ENCODE measurements at regions of chr6 and their contacts with region 1.

Region 1: GRCh38 chr6:27518881-27519795 is 46.2 kb upstream of the ZNF184 start:
- DNase-seq: peak; percentile 93
- H3K4me3 ChIP-seq: peak overlapping the region; percentile 47 to 74 (median 61)
- H3K27ac ChIP-seq: peak overlapping the region; percentile 27
- H3K4me1 ChIP-seq: peaks cover 3% of the 10 kb centered on the region
- H3K27me3 ChIP-seq: peaks cover 19 to 30% of the 10 kb centered on the region in 2 experiments
- CTCF ChIP-seq: peak; percentile 57 to 63
- POLR2A ChIP-seq: no peak

Region 2: DNA sequence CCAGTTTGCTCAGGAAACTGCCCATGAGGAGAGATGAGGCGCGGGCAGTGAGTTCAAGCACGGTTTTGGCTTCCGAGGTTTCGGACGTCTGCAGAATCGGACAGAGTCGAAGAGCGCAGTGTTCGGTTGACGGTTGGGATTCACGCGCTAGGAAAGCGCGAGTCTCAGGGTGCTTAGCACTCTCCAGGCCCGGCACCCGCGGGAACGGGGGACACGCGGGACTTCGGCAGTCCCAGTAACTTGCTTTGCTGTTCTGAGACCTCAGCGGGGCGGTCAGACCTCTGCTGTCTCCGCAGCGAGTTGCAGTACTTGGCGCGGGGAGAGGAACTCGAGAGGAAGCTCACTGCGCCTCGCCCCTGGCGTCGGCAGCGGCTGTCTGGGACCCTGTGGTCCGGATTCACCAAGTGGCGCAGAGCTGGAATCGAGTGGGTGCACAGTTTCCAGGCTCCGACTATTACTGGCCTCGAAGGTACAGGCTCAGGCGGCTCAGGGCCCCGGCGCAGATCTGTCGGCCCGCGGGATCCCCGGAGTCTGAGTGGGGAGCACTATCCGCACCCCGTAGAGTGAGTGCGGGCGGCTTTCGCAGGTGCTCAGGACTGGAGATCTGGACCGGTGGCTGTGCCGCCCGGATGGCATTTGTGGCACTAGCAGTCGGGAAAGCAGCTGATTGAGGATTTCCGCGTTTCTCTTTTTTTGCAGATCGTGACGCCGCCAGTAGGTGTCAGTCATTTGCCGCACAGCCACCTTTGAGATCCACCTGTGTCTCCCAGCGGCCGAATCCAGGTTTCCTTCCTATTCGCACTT is 206.8 kb before region 1 on chr6 and contains the start of gene POM121L2:
- CTCF ChIA-PET with region 1: interaction called, 9 read pairs
- POLR2A ChIA-PET with region 1: no interaction called
- dilution Hi-C with region 1: no loop called
- intact Hi-C with region 1: loop called (anchors 1 kb)
- DNase-seq: peak; percentile 65
- H3K4me3 ChIP-seq: peak within 1 kb of the TSS; percentile 41 to 60 (median 51)
- H3K27ac ChIP-seq: no peak within 1 kb of the TSS
- H3K4me1 ChIP-seq: peaks cover 9% of the 10 kb centered on the region
- H3K27me3 ChIP-seq: peaks cover 14 to 20% of the 10 kb centered on the region in 2 experiments
- CTCF ChIP-seq: peak; percentile 50 to 69
- POLR2A ChIP-seq: no peak
- total RNA-seq, gene POM121L2: not detected in 2 replicates

Region 3: DNA sequence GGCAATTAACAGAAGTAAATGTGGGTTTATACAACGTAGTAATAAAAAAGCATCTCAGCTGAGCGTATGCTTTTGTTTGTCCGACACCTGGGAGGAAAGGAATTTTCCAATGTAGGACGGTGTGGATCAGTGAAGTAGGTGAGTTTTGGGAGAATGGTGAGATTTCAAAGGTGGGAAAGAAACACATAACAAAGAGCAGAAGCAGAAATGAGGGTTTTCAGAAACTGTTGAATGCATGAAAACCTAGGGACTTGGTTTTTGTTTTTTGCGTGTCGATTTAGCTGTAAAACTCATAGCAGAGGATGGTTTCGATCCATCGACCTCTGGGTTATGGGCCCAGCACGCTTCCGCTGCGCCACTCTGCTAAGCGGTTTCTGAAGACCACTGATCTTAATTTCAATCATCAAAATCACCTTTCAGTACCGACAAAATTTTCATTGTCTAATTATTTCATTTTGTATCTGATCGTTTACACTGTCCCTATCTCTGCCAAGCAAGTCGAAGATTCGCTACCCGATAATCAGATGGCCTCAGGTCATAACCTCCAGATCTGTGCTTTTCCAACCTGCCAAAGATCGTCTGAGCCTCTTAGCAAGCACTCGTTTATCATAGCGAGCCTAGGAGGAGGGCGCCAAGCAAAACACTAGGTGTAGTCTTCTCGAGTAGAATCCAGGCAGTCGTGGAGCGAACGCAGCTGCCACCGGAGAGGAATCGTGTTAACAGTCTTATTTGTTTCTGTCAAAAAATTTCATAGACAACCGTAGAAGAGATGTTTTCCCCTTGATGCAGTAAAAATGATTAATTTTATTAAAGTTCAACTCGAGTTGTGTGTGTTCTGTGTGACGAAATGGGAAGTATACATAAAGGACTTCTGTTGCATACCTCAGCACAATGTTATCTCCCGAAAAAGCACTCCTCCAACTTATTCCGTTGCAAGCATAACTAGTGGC is 186.2 kb before region 1 on chr6:
- CTCF ChIA-PET with region 1: no interaction called
- POLR2A ChIA-PET with region 1: no interaction called
- dilution Hi-C with region 1: no loop called
- intact Hi-C with region 1: no loop called
- DNase-seq: peak; percentile 37
- H3K4me3 ChIP-seq: peak overlapping the region in 2 of 3 experiments; percentile 29 to 47
- H3K27ac ChIP-seq: no peak overlapping the region
- H3K4me1 ChIP-seq: no peaks in the 10 kb centered on the region
- H3K27me3 ChIP-seq: peaks cover 1 to 2% of the 10 kb centered on the region in 2 experiments
- CTCF ChIP-seq: no peak
- POLR2A ChIP-seq: no peak

Region 4: DNA sequence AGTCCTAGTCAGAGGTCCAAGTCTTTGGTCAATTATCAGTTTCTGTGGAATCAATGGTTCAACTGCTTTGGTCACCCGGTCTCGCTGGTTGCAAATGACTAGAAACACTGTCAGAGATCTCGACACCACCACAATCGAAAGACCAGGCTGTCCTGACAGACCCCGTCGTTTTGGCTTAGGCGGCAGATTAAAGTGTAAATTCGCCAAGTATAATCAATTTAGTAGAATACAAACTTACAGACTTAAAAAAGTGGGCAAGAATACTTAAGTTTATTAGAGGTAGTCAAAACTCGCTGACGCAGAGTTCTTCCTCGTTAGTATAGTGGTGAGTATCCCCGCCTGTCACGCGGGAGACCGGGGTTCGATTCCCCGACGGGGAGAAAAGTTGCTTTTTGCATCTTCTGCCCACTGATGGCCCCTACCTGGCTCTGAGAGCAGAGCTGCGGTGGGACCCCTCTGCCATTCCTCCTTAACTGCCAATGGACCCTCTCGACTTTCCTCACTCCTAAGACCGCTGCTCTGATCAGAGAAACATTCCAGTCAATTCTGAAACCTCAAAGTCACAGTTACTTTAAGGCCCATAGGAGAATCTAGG is 15.6 kb before region 1 on chr6:
- CTCF ChIA-PET with region 1: interaction called, 55 read pairs
- POLR2A ChIA-PET with region 1: no interaction called
- dilution Hi-C with region 1: no loop called
- intact Hi-C with region 1: loop called (anchors 1 kb)
- DNase-seq: peak; percentile 83
- H3K4me3 ChIP-seq: peak overlapping the region; percentile 38 to 97 (median 95)
- H3K27ac ChIP-seq: peak overlapping the region; percentile 15
- H3K4me1 ChIP-seq: peaks cover 14% of the 10 kb centered on the region
- H3K27me3 ChIP-seq: peaks cover 5 to 11% of the 10 kb centered on the region in 2 experiments
- CTCF ChIP-seq: no peak
- POLR2A ChIP-seq: no peak

Region 5: DNA sequence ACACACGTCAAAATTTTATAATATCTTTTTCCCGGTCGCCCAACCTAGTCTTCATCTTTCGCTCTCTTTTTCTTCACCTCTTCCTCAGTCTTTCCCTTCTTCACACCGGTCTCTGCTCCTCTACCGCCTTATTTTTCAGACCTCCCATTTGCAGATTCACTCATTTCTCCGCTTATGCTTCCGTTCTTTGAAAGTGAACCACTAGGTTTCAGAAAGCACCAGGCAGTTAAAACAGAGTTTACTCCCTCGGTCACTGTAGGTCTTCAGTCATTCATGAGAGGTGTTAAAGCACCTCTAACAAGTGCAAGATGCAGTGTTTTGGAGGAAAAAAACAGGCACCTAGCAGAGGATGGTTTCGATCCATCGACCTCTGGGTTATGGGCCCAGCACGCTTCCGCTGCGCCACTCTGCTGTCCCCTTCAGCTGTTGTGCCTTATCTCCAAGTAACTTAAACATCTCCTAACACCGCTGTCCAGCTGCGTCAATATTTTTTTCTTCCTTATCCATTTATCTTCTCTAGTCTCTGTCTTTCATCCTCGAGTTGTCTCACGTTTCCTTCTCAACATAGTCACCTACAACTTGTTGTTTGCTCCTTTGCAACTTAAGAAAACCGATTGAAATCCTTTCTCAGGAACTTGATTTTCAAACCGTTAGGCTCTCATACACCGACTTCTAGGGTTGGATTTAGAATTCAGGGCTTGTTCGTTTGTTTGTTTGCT is 73.5 kb after region 1 on chr6:
- CTCF ChIA-PET with region 1: interaction called, 4 read pairs
- POLR2A ChIA-PET with region 1: no interaction called
- dilution Hi-C with region 1: no loop called
- intact Hi-C with region 1: loop called (anchors 1 kb)
- DNase-seq: peak; percentile 44
- H3K4me3 ChIP-seq: peak overlapping the region in 2 of 3 experiments; percentile 54 to 69
- H3K27ac ChIP-seq: no peak overlapping the region
- H3K4me1 ChIP-seq: peaks cover 10% of the 10 kb centered on the region
- H3K27me3 ChIP-seq: peaks cover 13 to 14% of the 10 kb centered on the region in 2 experiments
- CTCF ChIP-seq: no peak
- POLR2A ChIP-seq: no peak

Region 6: DNA sequence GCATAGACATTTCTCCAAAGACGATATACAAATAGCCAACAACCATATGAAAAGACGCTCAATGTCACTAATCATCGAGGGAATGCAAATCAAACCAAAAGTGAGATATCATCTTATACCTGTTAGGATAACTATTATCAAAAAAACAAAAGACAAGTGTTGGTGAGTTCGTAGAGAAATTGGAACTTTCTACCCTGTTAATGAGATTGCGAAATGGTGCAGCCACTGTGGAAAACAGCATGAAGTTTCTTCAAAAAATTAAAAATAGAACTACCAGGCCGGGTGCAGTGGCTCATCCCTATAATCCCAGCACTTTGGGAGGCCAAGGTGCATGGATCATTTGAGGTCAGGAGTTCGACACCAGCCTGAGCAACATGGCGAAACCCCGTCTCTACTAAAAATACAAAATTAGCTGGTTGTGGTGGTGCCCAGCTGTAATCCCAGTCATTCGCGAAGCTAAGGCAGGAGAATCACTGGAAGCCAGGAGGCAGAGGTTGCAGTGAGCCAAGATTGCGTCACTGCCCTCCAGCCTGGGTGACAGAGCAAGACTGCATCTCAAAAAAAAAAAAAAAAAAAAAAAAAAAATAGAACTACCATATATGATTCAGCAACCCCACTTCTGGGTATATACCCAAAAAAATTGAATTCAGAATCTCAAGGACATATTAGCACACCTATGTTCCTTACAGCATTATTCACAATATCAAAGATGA is 123.8 kb after region 1 on chr6:
- CTCF ChIA-PET with region 1: no interaction called
- POLR2A ChIA-PET with region 1: no interaction called
- dilution Hi-C with region 1: no loop called
- intact Hi-C with region 1: no loop called
- DNase-seq: no peak
- H3K4me3 ChIP-seq: no peak overlapping the region
- H3K27ac ChIP-seq: no peak overlapping the region
- H3K4me1 ChIP-seq: no peaks in the 10 kb centered on the region
- H3K27me3 ChIP-seq: no peaks in the 10 kb centered on the region
- CTCF ChIP-seq: no peak
- POLR2A ChIP-seq: no peak

Region 7: DNA sequence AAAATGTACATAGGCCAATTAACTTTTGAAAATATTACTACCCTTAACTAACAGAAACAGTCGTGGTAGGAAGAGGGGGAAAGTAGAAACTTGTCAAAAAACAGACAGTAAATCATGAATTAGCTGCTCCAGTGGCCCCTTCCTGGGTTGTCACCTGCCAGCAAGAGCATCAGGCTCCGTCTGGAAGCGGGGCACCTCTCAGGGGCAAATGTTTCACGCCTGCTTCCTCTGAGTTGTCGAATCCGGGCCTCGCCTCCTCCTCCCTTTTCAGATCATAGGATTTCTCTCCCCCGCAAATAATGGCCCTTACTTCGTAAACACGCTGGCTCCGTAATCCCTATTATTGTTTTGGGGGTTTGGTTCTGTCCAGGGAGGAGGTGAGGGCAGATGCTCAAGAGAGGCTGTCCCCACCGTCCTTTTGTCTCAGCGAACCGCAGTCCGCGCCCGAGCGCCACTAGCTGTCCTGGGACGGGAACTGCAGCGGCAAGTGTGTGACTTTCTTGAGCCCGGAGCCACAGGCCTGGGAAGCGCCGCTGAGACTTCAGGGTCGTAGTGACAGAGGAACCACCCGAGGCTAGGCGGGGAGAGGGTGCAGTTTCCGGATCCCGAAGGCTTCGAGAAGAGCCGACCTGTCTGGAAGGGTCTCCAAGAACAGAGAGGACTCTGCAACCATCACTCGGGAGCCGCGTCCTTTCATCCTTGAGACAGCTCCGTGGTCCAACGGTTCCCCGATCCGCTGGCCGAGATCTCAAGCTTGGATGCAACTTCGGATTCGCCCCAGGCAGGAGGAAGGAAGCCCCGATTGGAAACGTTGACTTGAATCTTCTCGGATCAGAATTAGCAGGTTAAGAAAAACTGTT is 168.2 kb after region 1 on chr6:
- CTCF ChIA-PET with region 1: interaction called, 10 read pairs
- POLR2A ChIA-PET with region 1: no interaction called
- dilution Hi-C with region 1: no loop called
- intact Hi-C with region 1: loop called (anchors 1 kb)
- DNase-seq: peak; percentile 75
- H3K4me3 ChIP-seq: peak overlapping the region; percentile 33 to 77 (median 62)
- H3K27ac ChIP-seq: no peak overlapping the region
- H3K4me1 ChIP-seq: peaks cover 3% of the 10 kb centered on the region
- H3K27me3 ChIP-seq: peaks cover 0 to 2% of the 10 kb centered on the region in 2 experiments
- CTCF ChIP-seq: peak; percentile 57 to 75
- POLR2A ChIP-seq: no peak